Heart left ventricle (tissue), 16 donors: ENCODE measurements at regions of chr13 and their contacts with region 1.

Region 1: DNA sequence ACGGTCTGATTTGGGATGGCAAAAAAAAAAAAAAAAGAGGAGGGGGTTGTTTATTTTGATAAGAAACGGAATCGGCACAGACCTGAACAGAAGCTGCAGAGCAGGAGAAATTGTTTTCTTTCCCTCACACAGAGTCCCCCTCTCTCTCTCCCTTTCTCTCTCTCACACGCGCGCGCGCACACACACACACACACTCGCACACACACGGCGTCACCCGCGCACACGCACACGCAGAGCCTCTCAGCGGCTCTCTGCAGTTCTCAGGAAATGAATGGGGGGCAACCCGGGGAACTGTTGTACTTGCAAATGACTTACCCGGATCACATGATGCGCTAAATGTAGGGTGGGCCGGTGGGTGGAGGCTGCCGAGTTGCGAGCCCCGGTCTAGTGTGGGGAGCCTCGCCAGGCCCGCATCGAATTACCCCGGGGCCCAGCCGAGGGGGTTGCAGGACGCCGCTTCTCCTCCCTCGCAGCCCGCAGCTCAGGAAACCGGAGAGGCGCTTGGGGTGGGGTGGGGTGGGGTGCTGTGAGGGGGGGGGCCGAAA is 475 bp downstream of the KLF12 start:
- DNase-seq: peak; percentile 89 to 92 (median 89)
- ATAC-seq: peak; percentile 64 to 78 (median 74)
- H3K4me3 ChIP-seq: peak overlapping the region; percentile 69 to 97 (median 89)
- H3K27ac ChIP-seq: peak overlapping the region; percentile 92 to 99 (median 98)
- H3K4me1 ChIP-seq: peaks cover 3 to 43% (median 36%) of the 10 kb centered on the region in 12 donors
- H3K27me3 ChIP-seq: peaks cover 0 to 4% (median 0%) of the 10 kb centered on the region in 9 donors
- CTCF ChIP-seq: no peak
- POLR2A ChIP-seq: peak in 1 of 2 donors; percentile 25

Region 2: DNA sequence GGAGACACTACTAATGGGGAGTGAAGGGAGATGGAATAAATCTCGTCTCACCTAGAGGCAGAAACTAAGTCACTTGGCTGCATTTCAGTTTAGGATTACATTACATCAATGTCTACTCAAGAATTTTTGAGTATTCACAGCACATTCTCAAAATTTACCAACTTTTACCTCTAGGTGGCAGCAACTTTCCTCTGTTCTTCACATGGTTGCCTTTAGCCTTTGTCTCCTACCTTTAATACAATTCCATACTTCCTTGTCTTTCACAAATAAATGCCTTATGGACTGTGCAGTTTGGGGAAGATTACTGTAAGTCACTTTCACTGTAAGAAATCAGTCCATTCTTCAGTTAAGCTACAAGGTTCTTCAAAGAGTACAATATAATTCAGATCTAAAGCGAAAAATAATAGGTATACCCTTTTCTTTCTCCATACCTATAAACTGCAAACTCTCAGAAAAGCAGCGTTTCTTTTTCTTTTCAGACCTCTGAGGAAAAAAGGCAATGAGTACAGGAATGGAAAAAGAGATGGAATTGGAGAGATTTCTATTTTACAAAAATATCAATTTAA is 378.9 kb before region 1 on chr13:
- intact Hi-C with region 1: loop called in 3 of 10 experiments (anchors 10 kb)
- DNase-seq: peak in 1 of 5 donors; percentile 34
- ATAC-seq: peak in 3 of 4 donors; percentile 64 to 67 (median 65)
- H3K4me3 ChIP-seq: no peak overlapping the region
- H3K27ac ChIP-seq: no peak overlapping the region
- H3K4me1 ChIP-seq: peaks cover 0 to 8% (median 0%) of the 10 kb centered on the region in 12 donors
- H3K27me3 ChIP-seq: no peaks in the 10 kb centered on the region
- CTCF ChIP-seq: peak; percentile 56 to 83 (median 70)
- POLR2A ChIP-seq: no peak

Region 3: GRCh38 chr13:73938375-73939070 is 195.2 kb before region 1 on chr13:
- intact Hi-C with region 1: loop called in 3 of 10 experiments (anchors 5 to 10 kb)
- DNase-seq: no peak
- ATAC-seq: peak in 1 of 4 donors; percentile 44
- H3K4me3 ChIP-seq: no peak overlapping the region
- H3K27ac ChIP-seq: no peak overlapping the region
- H3K4me1 ChIP-seq: peaks cover 0 to 42% (median 15%) of the 10 kb centered on the region in 12 donors
- H3K27me3 ChIP-seq: no peaks in the 10 kb centered on the region
- CTCF ChIP-seq: no peak
- POLR2A ChIP-seq: no peak

Region 4: GRCh38 chr13:74056801-74057542 is 76.8 kb before region 1 on chr13:
- intact Hi-C with region 1: loop called in 6 of 10 experiments (anchors 2 to 5 kb)
- DNase-seq: peak; percentile 62 to 86 (median 82)
- ATAC-seq: peak; percentile 92 to 96 (median 94)
- H3K4me3 ChIP-seq: peak overlapping the region in 4 of 12 donors; percentile 6 to 14 (median 8)
- H3K27ac ChIP-seq: peak overlapping the region; percentile 41 to 85 (median 70)
- H3K4me1 ChIP-seq: peaks cover 5 to 74% (median 40%) of the 10 kb centered on the region in 12 donors
- H3K27me3 ChIP-seq: no peaks in the 10 kb centered on the region
- CTCF ChIP-seq: peak in 1 of 12 donors; percentile 11
- POLR2A ChIP-seq: no peak

Region 5: GRCh38 chr13:74287724-74288169 is 154.0 kb after region 1 on chr13:
- intact Hi-C with region 1: loop called in 8 of 10 experiments (anchors 1 to 10 kb)
- DNase-seq: peak; percentile 71 to 87 (median 74)
- ATAC-seq: peak; percentile 16 to 39 (median 37)
- H3K4me3 ChIP-seq: peak overlapping the region in 10 of 12 donors; percentile 16 to 46 (median 36)
- H3K27ac ChIP-seq: peak overlapping the region in 5 of 12 donors; percentile 10 to 63 (median 56)
- H3K4me1 ChIP-seq: peaks cover 0 to 41% (median 25%) of the 10 kb centered on the region in 12 donors
- H3K27me3 ChIP-seq: no peaks in the 10 kb centered on the region
- CTCF ChIP-seq: no peak
- POLR2A ChIP-seq: no peak

Region 6: DNA sequence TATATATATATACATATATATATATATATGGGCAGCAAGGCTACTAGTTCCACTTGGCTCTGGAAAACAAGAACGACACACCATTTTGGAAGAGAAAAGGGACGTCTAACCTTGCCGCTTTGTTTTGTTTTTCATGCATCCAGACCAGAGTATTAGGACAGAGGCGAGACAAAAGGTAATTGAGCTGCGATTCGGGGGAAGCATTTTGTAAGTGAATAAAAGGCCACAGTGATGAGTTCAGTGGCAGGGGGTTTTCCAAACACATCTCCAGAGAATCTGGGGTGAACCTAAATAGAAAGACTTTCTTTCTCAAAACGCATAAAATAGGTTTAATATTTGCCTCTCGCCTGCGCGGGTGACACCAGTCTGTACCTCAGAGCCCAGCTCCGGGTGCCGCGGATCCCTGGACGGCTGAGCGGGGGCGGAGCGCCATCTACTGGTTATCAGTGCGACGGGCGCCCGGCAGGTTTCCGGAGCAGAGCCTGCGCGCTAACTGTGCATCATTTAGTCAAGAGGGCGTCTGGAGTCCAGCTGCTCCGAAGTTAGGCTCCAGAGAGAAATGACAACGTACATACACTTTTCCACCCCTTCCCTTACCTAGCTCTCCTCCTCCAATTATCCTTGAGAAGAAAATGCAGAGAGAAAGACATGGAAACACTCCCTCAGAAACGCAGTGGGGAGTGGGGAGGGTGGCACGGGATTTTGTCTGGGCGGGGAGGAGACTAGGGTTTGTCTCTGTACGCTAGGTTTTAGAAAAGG is 1085.9 kb after region 1 on chr13:
- intact Hi-C with region 1: loop called in 1 of 10 experiments (anchors 5 kb)
- DNase-seq: peak; percentile 71 to 92 (median 85)
- ATAC-seq: peak; percentile 92 to 99 (median 96)
- H3K4me3 ChIP-seq: peak overlapping the region in 9 of 12 donors; percentile 19 to 44 (median 30)
- H3K27ac ChIP-seq: no peak overlapping the region
- H3K4me1 ChIP-seq: peaks cover 0 to 10% (median 0%) of the 10 kb centered on the region in 12 donors
- H3K27me3 ChIP-seq: peaks cover 0 to 4% (median 0%) of the 10 kb centered on the region in 9 donors
- CTCF ChIP-seq: peak; percentile 92 to 99 (median 98)
- POLR2A ChIP-seq: no peak